ENCODE measurements at regions of chr21 and their contacts with region 1.

Region 1: DNA sequence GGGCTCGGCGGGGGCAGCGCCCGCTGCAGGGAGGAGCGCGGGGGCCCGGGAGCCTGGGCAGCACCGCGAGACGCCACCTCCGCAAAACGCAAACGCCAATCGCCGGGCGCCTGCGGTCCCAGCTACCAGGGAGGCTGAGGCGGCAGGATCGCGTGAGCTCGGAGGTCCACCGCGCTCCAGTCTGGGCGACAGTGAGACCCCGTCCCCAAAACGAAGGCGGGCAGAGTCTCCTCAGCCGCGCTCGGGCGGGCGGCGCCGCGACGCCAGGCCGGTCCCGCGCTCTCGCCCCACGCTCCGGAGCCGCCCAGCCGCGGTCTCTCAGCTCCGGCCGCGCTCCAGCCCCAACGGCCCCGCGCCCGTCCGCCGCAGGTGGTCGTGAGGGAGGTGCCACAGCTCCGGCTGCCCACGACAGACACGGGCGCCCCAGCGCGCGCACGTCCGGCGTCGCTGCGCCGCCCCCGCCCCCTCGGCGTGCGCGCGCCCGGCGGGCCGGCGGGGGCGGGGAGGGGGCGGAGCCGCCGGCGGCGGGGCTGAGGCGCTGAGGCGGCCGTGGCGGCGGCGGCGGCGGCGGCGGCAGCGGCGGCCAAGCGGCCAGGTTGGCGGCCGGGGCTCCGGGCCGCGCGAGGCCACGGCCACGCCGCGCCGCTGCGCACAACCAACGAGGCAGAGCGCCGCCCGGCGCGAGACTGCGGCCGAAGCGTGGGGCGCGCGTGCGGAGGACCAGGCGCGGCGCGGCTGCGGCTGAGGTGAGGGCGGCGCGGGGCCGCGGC is at the start of gene ADARB1:
- DNase-seq: peak; percentile 72 to 90 (median 89)
- ATAC-seq: peak; percentile 59 to 81
- H3K4me3 ChIP-seq: peak within 1 kb of the TSS; percentile 90
- H3K27ac ChIP-seq: peak within 1 kb of the TSS; percentile 71
- H3K4me1 ChIP-seq: peaks cover 5% of the 10 kb centered on the region
- H3K27me3 ChIP-seq: no peaks in the 10 kb centered on the region
- total RNA-seq, gene ADARB1: 16.9 to 23.8 (median 19.4) TPM

Region 2: DNA sequence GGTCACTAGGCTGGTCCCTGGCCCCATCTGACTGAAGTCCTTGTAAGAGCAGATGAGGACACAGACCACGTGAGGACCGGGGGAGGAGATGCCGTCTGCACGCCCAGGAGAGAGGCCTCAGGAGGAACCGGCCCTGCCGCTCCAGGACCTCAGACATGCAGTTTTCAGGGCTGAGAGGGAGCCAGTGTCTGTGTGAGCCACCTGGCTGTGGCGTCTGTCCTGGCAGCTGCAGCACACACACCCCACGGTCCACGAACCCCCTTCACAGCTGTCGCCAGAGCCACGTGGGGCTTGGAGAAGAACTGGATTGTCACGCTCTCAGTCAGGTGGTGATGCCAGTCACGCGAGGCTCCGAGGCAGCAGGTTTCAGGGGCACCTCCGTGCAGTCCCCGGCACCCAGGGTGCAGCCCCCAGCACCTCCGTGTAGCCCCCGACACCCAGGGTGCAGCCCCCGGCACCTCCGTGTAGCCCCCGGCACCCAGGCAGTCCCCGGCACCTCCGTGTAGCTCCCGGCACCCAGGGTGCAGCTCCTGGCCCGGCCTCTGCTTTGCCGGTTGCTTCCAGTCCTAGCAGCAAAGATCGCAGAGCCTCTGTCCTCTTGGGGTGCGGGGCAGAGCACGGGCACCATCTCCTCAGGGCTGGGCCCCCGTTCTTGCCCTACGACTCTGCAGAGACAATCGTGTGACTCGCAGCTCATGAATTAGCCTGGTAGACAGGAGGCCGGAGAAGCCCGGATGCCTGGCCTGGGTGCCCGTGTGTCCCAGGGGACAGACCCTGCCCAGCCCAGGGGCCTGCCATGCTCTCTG is 237.4 kb before region 1 on chr21:
- intact Hi-C with region 1: no loop called
- DNase-seq: no peak
- ATAC-seq: peak; percentile 54 to 67
- H3K4me3 ChIP-seq: no peak overlapping the region
- H3K27ac ChIP-seq: no peak overlapping the region
- H3K4me1 ChIP-seq: no peaks in the 10 kb centered on the region
- H3K27me3 ChIP-seq: no peaks in the 10 kb centered on the region

Region 3: GRCh38 chr21:44962403-44962966 is 111.7 kb before region 1 on chr21:
- intact Hi-C with region 1: loop called in 1 of 4 experiments (anchors 10 kb)
- DNase-seq: peak; percentile 19 to 62 (median 42)
- ATAC-seq: peak in 1 of 2 donors; percentile 9
- H3K4me3 ChIP-seq: no peak overlapping the region
- H3K27ac ChIP-seq: peak overlapping the region; percentile 22
- H3K4me1 ChIP-seq: peaks cover 18% of the 10 kb centered on the region
- H3K27me3 ChIP-seq: no peaks in the 10 kb centered on the region

Region 4: DNA sequence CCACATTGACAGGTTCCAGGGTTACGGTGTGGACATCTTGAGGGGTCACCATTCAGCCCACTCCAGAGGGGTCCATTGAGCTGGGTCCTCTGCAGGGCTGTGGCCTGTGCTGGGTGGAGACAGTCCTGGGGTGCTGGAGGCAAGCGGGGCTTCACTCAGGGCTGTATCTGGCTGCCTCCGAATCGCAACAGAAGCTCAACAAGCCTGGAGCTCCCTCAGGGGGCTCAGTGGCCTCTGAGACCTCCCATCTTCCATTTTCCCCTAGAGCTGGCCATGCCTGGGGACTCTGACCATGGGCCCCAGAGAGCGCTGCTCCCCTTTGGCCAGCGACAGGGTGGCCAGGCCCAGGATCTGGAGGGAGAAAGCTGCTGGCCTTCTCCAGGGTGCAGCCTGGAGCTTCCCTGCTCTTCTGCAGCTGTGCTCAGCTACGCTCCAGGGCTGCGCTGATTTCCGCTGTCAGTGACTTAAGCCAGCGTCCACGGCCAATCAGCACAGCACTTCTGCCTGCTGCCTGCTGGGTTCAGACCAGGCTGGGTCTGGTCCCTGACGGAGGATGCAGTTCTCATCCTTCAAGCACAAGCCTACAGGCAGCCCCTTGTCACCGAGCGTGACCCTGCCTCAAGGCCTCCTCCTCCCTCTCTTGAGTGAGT is 44.8 kb before region 1 on chr21:
- intact Hi-C with region 1: loop called in 1 of 4 experiments (anchors 10 kb)
- DNase-seq: peak; percentile 61 to 83 (median 80)
- ATAC-seq: peak; percentile 59 to 65
- H3K4me3 ChIP-seq: no peak overlapping the region
- H3K27ac ChIP-seq: no peak overlapping the region
- H3K4me1 ChIP-seq: peaks cover 11% of the 10 kb centered on the region
- H3K27me3 ChIP-seq: no peaks in the 10 kb centered on the region

Region 5: DNA sequence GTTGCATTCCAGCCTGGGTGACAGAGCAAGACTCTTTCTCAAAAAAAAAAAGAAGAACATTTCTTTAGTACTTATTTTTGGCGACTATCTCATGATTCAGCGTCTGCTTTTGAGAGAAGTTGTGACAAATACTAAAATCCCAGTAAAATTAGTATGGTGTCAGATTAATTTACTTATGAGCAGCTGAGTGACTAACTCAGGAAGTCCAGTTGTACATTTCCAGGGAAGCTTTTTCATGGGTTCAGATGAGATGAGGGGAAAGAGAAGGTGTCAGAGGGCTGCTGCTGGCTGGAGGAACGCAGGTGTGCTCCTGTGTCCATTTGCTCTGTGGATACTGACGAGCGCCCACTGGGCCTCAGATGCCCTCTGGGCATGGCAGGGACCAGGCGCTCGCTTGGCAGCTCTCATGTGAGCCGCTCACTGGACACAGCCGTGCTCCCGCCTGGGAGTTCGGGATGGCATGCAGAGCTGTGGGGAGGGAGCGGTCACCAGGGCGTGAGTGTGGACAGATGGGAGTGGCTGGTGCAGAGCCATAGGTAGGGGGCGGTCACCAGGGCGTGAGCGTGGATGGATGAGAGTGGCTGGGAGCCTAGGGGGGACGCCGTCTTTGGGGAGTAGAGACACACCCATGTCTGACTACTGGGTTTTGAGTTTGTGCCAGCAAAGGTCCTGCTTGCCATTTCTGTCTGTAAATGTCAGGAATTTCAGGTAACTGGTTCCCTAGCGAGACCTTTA is 55.1 kb after region 1 on chr21:
- intact Hi-C with region 1: loop called in 1 of 4 experiments (anchors 10 kb)
- DNase-seq: peak; percentile 50 to 85 (median 80)
- ATAC-seq: peak; percentile 64 to 75
- H3K4me3 ChIP-seq: no peak overlapping the region
- H3K27ac ChIP-seq: peak overlapping the region; percentile 32
- H3K4me1 ChIP-seq: peaks cover 11% of the 10 kb centered on the region
- H3K27me3 ChIP-seq: no peaks in the 10 kb centered on the region

Region 6: DNA sequence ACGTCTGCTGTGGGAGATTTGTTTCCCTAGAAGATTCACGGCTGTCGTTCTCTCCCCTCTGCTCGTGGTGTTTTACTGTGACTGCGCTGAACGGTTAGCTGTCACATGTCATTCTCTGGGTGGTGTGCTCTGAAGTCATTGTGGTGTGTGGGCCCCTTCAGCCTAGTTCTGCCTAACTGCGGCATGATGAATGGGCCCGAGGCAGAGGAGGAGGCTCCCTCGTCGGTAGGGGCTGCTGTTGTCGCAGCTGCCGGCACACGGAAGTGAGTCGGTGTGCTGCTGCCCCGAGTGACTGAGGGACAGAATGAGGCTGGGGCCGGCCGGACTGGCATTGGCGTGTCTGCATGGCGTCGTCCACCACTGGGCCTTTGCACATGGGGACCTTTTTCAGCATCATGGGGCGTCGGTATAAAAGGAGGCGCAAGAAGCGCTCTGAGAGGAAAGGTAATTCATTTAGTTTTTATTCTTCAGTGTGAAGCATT is 78.1 kb after region 1 on chr21:
- intact Hi-C with region 1: no loop called
- DNase-seq: peak; percentile 44 to 71 (median 65)
- ATAC-seq: peak; percentile 35 to 50
- H3K4me3 ChIP-seq: no peak overlapping the region
- H3K27ac ChIP-seq: no peak overlapping the region
- H3K4me1 ChIP-seq: no peaks in the 10 kb centered on the region
- H3K27me3 ChIP-seq: no peaks in the 10 kb centered on the region